Activated CD4-positive, alpha-beta T cell treated with anti-CD3 and anti-CD28 coated beads, Interleukin-2, amount 10 ng/mL, durations not matched to agents 24 days and 14 days (primary cell): ENCODE measurements at regions of chr12 and their contacts with region 1.

Region 1: DNA sequence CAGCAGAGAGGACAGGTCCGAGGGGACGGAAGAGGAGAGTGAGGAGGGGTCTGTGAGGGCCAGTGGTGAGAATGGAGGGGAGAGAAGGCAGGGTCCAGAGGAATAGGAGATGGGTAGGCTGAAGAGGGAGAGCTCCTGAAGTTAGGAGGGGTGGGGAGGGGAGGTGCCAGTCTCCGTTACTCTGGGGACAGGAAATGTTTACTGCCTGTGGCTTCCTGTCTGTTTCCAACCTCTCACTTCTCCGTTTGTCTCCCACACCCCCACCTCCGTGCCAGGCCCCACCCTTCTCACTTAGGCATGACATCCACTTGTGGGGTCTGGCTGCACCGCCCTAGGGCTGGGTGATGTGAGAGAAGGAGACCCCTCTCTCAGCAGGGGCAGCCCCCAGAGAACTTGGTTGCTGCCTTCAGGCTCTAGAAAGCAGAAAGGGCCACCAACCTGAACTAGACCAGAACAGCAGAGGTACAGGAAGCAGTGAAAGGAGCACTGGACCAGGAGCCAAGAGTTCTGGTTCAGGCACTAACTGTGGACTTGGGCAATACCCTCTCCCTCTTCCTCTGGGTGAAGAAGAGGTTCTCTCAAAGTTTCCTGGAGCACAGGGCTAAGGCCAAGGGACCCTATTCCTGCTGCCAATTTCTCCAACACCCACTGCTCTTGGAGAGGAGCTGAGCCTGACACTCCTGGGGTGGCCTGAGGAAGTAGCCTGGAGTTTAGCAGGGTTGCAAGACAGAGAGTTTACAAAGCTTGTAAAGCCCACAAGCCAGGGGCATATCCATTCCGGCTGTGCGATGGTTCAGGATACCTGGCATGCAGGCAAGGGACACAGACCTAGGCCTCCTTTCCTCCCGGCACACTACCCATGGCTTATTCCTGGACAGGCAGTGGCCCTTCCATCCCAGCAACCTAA is 5.5 kb downstream of the ITGA5 start:
- DNase-seq: peak; percentile 94
- H3K4me3 Mint-ChIP-seq: peak overlapping the region; percentile 84
- H3K27ac Mint-ChIP-seq: peak overlapping the region; percentile 98
- H3K4me1 Mint-ChIP-seq: peaks cover 64% of the 10 kb centered on the region
- H3K27me3 Mint-ChIP-seq: no peaks in the 10 kb centered on the region

Region 2: GRCh38 chr12:54394281-54394719 is 19.2 kb before region 1 on chr12:
- intact Hi-C with region 1: no loop called
- DNase-seq: peak; percentile 81
- H3K4me3 Mint-ChIP-seq: no peak overlapping the region
- H3K27ac Mint-ChIP-seq: no peak overlapping the region
- H3K4me1 Mint-ChIP-seq: peaks cover 28% of the 10 kb centered on the region
- H3K27me3 Mint-ChIP-seq: no peaks in the 10 kb centered on the region

Region 3: GRCh38 chr12:54439521-54440255 is 26.2 kb after region 1 on chr12:
- intact Hi-C with region 1: loop called (anchors 1 kb)
- DNase-seq: peak; percentile 69
- H3K4me3 Mint-ChIP-seq: no peak overlapping the region
- H3K27ac Mint-ChIP-seq: no peak overlapping the region
- H3K4me1 Mint-ChIP-seq: peaks cover 9% of the 10 kb centered on the region
- H3K27me3 Mint-ChIP-seq: peaks cover 16% of the 10 kb centered on the region

Region 4: GRCh38 chr12:54460317-54460923 is 46.9 kb after region 1 on chr12:
- intact Hi-C with region 1: no loop called
- DNase-seq: no peak
- H3K4me3 Mint-ChIP-seq: no peak overlapping the region
- H3K27ac Mint-ChIP-seq: no peak overlapping the region
- H3K4me1 Mint-ChIP-seq: peaks cover 2% of the 10 kb centered on the region
- H3K27me3 Mint-ChIP-seq: peaks cover 58% of the 10 kb centered on the region